Panc1 (cell line): ENCODE measurements at regions of chr3 and their contacts with region 1.

Region 1: DNA sequence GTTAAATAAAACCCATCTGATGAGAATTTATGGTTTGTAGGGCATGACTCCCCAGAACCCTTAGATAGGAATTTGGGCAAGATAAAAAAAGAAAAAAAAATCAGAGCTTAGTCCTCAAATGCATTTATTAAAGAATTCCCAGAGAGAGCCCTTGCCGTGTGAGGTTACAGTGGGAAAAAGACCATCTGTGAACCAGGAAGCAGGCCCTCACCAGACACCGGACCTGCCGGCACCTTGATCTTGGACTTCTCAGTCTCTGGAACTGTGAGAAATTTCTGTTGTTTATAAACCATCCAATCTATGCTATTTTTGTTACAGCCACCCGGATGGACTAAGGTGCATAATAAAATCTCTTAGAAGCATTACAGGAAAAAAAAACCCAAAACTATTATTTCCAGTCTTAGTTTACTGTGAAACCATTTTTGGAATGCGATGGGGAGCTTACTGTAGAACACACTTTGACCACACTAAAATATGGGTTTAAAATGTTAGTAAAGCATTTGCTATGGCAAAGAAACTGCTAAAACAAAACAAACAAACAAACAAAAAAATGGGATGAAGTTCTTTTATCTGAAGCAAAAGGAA is 72.2 kb downstream of the LEKR1 start:
- DNase-seq: no peak
- ATAC-seq: no peak
- H3K4me3 ChIP-seq: no peak overlapping the region
- H3K27ac ChIP-seq: no peak overlapping the region
- H3K4me1 ChIP-seq: no peaks in the 10 kb centered on the region
- H3K27me3 ChIP-seq: no peaks in the 10 kb centered on the region
- CTCF ChIP-seq: no peak

Region 2: GRCh38 chr3:156826144-156826895 is 72.1 kb before region 1 on chr3 and contains the start of gene LEKR1:
- CTCF ChIA-PET with region 1: no interaction called
- POLR2A ChIA-PET with region 1: no interaction called
- in situ Hi-C with region 1: no loop called
- intact Hi-C with region 1: no loop called
- DNase-seq: no peak
- ATAC-seq: no peak
- H3K4me3 ChIP-seq: peak within 1 kb of the TSS in 1 of 2 experiments; percentile 28; a peak in 1 of 4 replicates
- H3K27ac ChIP-seq: no peak within 1 kb of the TSS
- H3K4me1 ChIP-seq: no peaks in the 10 kb centered on the region
- H3K27me3 ChIP-seq: no peaks in the 10 kb centered on the region
- CTCF ChIP-seq: no peak
- total RNA-seq, gene LEKR1: not detected

Region 3: DNA sequence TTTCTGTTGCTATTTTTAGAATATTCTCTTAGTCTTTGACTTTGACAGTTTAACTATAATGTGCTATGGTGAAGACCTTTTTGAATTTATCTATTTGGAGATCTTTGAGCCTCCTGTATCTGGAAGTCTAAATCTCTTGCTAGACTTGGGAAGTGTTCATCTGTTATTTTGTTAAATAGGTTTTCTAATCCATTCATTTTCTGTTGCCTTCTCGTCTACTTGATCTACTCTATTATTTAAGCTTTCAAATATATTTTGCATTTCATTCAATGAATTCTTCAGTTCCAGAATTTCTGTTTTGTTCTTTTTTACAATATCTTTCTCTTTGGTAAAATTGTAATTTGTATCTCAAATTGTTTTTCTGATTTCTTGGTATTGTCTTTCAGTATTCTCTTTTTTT is 24.5 kb before region 1 on chr3:
- CTCF ChIA-PET with region 1: no interaction called
- POLR2A ChIA-PET with region 1: interaction called, 10 read pairs
- in situ Hi-C with region 1: no loop called
- intact Hi-C with region 1: no loop called
- DNase-seq: no peak
- ATAC-seq: no peak
- H3K4me3 ChIP-seq: no peak overlapping the region
- H3K27ac ChIP-seq: no peak overlapping the region
- H3K4me1 ChIP-seq: no peaks in the 10 kb centered on the region
- H3K27me3 ChIP-seq: no peaks in the 10 kb centered on the region
- CTCF ChIP-seq: no peak

Region 4: DNA sequence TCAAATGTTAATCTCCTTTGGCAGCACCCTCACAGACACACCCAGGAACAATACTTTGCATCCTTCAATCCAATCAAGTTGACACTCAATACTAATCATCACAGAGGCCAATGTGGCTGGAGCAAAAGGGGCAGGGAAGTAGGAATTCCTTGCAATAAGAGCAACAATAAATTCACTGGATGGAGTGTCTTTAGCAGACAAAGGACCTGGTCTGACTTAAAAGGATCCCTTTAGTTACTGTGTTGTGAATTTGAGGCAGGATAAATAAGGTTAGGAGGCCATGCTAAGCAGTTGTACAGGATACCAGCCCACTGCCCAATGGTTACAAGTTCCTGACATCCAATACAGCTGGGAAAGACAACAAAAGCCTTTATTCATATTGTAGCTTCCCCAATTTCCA is 1733.6 kb after region 1 on chr3:
- CTCF ChIA-PET with region 1: no interaction called
- POLR2A ChIA-PET with region 1: no interaction called
- in situ Hi-C with region 1: no loop called
- intact Hi-C with region 1: no loop called
- DNase-seq: no peak
- ATAC-seq: no peak
- H3K4me3 ChIP-seq: no peak overlapping the region
- H3K27ac ChIP-seq: no peak overlapping the region
- H3K4me1 ChIP-seq: no peaks in the 10 kb centered on the region
- H3K27me3 ChIP-seq: no peaks in the 10 kb centered on the region
- CTCF ChIP-seq: no peak